Right ventricle myocardium inferior (tissue), 1 donor: ENCODE measurements at regions of chr11 and their contacts with region 1.

Region 1: GRCh38 chr11:2137202-2138071 is 1.8 kb downstream of the IGF2 start:
- DNase-seq: no peak
- ATAC-seq: peak; percentile 62

Region 2: DNA sequence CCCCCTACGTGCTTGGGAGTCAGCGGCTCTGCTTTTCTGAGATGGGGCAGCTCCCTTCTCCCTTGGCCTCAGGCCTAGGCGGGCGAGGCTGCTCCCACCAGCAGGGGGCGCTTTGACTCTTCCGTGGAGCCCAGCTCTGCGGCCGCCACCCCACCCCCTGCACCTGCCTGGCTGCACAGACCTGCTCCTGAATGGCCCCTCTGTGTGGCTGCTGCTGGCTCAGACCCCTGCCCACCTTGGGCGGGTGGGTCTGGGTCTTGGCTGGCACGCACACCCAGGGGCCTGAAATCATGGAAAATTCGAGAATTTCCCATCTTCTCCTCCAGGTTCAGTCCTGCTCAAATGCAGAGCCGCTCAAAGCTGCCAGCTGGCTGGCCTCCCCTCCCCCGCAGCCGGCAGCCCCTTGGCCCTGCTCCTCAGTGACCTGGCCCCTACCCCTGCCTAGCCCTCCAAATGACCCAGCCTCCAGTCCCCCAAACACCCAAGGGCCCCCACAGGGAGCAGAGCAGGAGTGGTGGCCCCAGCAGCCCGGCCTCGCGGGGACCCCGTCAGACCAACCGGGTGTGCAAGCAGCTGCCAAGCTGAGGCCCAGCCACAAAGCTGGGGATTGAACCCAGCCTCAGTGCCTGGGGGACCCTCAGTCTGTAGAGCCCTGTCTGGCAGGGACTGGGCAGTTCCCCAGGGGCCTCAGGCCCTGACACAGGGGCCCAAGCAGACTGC is 254.8 kb before region 1 on chr11:
- intact Hi-C with region 1: loop called (anchors 5 kb)
- DNase-seq: peak; percentile 93
- ATAC-seq: peak; percentile 67

Region 3: GRCh38 chr11:2096001-2096918 is 41.2 kb before region 1 on chr11:
- intact Hi-C with region 1: loop called (anchors 1 kb)
- DNase-seq: peak; percentile 53
- ATAC-seq: no peak